A673 (cell line): ENCODE measurements at regions of chr1 and their contacts with region 1.

Region 1: DNA sequence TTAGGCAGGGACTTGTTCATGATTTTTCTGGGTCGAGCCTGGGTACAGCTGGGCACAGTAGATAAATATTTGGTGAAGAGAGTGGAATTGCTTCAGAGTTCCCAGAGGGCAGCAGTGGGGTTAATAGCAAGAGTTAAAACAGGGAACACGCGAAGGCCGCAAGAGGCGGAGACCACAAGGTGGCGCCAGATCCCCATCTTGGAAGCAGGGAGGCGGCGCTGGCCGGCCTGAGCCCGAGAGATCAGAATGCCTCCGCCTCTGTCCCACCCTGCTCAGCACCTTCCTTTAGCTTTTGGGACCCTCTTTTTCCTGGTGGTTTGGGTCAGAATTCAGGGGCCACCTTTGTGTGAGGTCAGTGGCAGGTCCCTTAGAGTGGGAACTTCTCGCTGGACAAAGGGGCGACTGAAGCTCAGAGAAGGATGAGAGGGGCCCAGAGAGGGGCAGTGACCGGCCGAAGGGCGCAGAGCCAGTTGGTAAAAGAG is 6.5 kb upstream of the PADI2 start:
- DNase-seq: peak; percentile 91
- H3K4me3 ChIP-seq: no peak overlapping the region
- H3K27ac ChIP-seq: no peak overlapping the region
- H3K4me1 ChIP-seq: peaks cover 53% of the 10 kb centered on the region
- H3K27me3 ChIP-seq: no peaks in the 10 kb centered on the region
- CTCF ChIP-seq: peak; percentile 94

Region 2: GRCh38 chr1:17190010-17190995 is 64.5 kb after region 1 on chr1:
- CTCF ChIA-PET with region 1: no interaction called
- POLR2A ChIA-PET with region 1: no interaction called
- intact Hi-C with region 1: loop called (anchors 5 kb)
- DNase-seq: no peak
- H3K4me3 ChIP-seq: no peak overlapping the region
- H3K27ac ChIP-seq: no peak overlapping the region
- H3K4me1 ChIP-seq: peaks cover 26% of the 10 kb centered on the region
- H3K27me3 ChIP-seq: no peaks in the 10 kb centered on the region
- CTCF ChIP-seq: no peak

Region 3: GRCh38 chr1:17207046-17207445 is 81.2 kb after region 1 on chr1:
- CTCF ChIA-PET with region 1: no interaction called
- POLR2A ChIA-PET with region 1: interaction called, 19 read pairs
- intact Hi-C with region 1: no loop called
- DNase-seq: no peak
- H3K4me3 ChIP-seq: no peak overlapping the region
- H3K27ac ChIP-seq: peak overlapping the region; percentile 52
- H3K4me1 ChIP-seq: peaks cover 38% of the 10 kb centered on the region
- H3K27me3 ChIP-seq: no peaks in the 10 kb centered on the region
- CTCF ChIP-seq: no peak

Region 4: DNA sequence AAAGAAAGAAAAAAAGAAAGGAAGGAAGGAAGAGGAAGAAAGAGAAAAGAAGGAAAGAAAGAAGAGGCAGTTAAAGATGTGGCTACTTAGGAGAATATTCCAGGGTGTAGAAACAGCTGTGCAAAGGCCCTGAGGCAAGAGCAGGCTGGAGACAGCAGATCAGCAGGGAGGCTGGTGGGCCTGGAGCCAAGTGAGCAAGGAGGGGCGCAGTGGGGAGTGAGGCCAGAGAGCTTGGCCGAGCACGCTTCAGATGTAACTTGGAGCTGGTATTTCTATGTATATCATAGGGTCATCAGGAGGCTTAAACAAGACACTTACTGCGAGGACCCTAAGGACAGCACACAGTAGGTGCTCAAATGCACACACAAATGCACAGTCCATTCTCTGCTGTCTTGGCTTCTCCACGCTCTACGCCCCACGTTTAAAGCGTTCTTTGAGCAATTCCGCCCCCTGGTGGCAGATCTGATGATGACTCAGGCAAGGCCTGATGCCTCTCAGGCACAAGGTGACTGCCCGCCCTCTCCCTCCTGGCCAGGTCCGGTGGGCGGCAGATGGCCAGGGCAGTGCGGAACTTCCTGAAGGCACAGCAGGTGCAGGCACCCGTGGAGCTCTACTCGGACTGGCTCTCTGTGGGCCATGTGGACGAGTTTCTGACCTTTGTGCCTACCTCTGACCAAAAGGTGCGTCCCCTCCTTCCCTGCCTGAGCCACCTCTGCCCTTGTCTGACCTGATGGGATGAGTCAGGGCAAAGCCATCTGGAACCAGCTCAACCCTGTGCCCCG is 111.2 kb after region 1 on chr1:
- CTCF ChIA-PET with region 1: interaction called, 14 read pairs
- POLR2A ChIA-PET with region 1: interaction called, 3 read pairs
- intact Hi-C with region 1: loop called (anchors 1 kb)
- DNase-seq: peak; percentile 94
- H3K4me3 ChIP-seq: no peak overlapping the region
- H3K27ac ChIP-seq: peak overlapping the region; percentile 84
- H3K4me1 ChIP-seq: peaks cover 41% of the 10 kb centered on the region
- H3K27me3 ChIP-seq: no peaks in the 10 kb centered on the region
- CTCF ChIP-seq: peak; percentile 90

Region 5: GRCh38 chr1:17287130-17287776 is 161.5 kb after region 1 on chr1:
- CTCF ChIA-PET with region 1: no interaction called
- POLR2A ChIA-PET with region 1: no interaction called
- intact Hi-C with region 1: loop called (anchors 5 kb)
- DNase-seq: peak; percentile 80
- H3K4me3 ChIP-seq: no peak overlapping the region
- H3K27ac ChIP-seq: no peak overlapping the region
- H3K4me1 ChIP-seq: peaks cover 13% of the 10 kb centered on the region
- H3K27me3 ChIP-seq: no peaks in the 10 kb centered on the region
- CTCF ChIP-seq: no peak

Region 6: GRCh38 chr1:17335821-17336710 is 210.3 kb after region 1 on chr1:
- CTCF ChIA-PET with region 1: interaction called, 6 read pairs
- POLR2A ChIA-PET with region 1: no interaction called
- intact Hi-C with region 1: loop called (anchors 2 kb)
- DNase-seq: peak; percentile 82
- H3K4me3 ChIP-seq: no peak overlapping the region
- H3K27ac ChIP-seq: no peak overlapping the region
- H3K4me1 ChIP-seq: no peaks in the 10 kb centered on the region
- H3K27me3 ChIP-seq: no peaks in the 10 kb centered on the region
- CTCF ChIP-seq: peak; percentile 97

Region 7: GRCh38 chr1:17405898-17406759 is 280.3 kb after region 1 on chr1:
- CTCF ChIA-PET with region 1: no interaction called
- POLR2A ChIA-PET with region 1: no interaction called
- intact Hi-C with region 1: loop called (anchors 10 kb)
- DNase-seq: peak; percentile 39
- H3K4me3 ChIP-seq: no peak overlapping the region
- H3K27ac ChIP-seq: no peak overlapping the region
- H3K4me1 ChIP-seq: no peaks in the 10 kb centered on the region
- H3K27me3 ChIP-seq: no peaks in the 10 kb centered on the region
- CTCF ChIP-seq: peak; percentile 77

Region 8: DNA sequence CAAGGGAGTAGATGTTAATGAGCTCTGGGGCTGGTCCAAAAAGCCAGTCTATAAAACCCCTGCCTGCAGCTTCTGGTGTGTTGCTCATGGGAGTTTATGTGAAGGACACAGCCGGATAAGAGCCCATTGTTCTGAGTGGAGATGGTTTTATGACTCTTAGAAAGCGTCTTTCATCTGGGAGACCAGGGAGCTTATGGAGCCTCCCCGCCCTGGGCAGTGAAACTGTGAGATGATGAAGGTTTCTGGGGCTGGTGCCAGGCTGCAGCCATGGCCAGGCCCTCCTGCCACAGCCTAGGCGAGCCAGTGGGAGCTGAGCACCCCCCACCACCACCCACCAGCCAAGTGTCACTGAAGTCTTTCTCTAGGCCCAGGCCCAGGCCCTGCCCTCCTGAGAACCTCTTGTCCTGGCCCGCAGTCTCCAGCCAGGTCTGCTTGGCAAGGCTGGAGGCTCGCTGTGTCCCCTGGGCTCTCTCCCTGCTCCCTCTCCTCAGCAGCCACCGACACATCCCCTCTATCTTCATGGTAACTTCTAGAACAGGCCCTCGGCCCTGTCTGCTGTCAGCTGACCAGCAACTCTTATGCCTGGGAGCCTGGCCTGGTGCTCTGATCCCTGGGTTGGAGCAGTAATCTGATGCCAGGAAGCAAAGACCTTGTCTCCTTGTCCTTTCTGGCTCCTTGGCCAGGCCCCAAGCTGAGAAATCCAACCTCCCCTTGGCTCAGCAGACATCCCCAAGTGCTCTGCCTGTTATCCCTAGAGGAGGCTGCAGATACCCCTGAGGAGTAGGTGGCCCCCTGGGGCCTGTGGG is 406.1 kb after region 1 on chr1:
- CTCF ChIA-PET with region 1: no interaction called
- POLR2A ChIA-PET with region 1: no interaction called
- intact Hi-C with region 1: no loop called
- DNase-seq: no peak
- H3K4me3 ChIP-seq: no peak overlapping the region
- H3K27ac ChIP-seq: no peak overlapping the region
- H3K4me1 ChIP-seq: no peaks in the 10 kb centered on the region
- H3K27me3 ChIP-seq: no peaks in the 10 kb centered on the region
- CTCF ChIP-seq: no peak